Mucosa of descending colon (tissue), 3 donors: ENCODE measurements at regions of chr2 and their contacts with region 1.

Region 1: DNA sequence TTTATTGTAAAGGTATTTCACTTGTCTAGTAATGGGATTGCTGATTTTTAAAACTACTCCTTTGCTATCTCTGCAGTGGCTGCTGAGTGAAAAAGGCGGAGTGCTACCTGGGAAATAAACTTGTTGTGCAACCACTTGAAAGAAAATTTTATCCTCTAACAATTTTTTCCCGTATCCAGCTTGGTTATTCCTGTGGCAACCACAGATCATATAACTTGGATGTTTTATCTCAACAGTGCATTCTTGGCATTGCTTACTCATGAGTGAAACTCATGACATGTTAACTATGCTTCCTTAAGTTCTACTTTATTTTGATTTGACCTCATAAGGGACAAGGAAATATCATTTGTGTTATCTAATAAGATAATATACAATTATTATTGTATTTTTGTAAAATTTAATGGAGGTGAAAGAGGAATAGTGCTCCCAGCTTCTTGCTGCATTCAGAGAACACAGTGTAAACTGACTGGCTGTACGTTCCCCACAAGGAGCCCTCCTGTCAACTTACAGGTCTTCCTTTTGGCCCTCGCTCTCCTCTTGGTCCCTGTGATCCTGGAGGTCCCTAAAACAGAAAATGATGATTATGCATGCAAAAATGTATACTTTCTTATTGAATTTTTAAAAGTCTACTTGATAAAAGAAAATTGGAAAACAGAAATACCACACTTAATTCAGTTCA is 82.7 kb downstream of the COL5A2 start:
- DNase-seq: no peak
- ATAC-seq: no peak
- H3K4me3 ChIP-seq: no peak overlapping the region
- H3K4me1 ChIP-seq: no peaks in the 10 kb centered on the region
- CTCF ChIP-seq: no peak

Region 2: DNA sequence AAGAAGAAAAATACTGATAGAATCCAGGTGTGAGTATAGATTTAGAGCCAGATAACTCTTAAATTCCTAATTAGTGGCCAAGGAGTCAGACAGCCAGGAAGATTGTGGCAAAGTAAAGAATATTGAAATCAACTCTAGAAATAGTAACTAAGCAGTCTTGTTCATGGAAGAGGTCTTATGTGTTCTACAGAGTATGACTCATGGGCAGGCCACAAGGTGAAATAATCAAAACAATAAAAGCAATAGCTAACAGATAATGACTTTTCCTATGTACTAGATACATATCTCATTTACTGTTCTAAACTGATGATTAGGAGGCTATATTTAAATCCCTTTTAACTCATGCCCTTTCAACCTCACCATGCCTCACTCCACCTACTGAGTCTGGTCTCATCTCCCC is 350.2 kb before region 1 on chr2:
- intact Hi-C with region 1: no loop called
- DNase-seq: no peak
- ATAC-seq: no peak
- H3K4me3 ChIP-seq: no peak overlapping the region
- H3K4me1 ChIP-seq: no peaks in the 10 kb centered on the region
- CTCF ChIP-seq: no peak

Region 3: DNA sequence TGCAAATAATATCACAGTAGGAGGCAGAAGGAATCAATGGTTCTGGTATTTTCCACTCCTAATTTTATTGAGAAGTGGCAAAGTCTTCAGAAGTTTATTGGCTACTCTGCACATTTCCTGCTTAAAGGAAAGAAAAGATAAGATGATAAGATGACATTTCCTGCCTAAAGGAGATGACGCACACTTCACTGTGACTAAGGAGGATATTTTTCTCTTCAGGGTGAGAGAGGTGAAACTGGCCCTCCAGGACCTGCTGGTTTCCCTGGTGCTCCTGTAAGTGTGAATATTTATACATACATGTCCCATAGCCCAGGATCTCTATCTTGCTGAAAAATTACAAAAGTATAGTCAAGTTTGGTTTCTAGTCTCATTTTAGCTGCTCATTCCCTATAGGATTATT is 94.8 kb before region 1 on chr2:
- intact Hi-C with region 1: no loop called
- DNase-seq: no peak
- ATAC-seq: no peak
- H3K4me3 ChIP-seq: no peak overlapping the region
- H3K4me1 ChIP-seq: no peaks in the 10 kb centered on the region
- CTCF ChIP-seq: no peak

Region 4: DNA sequence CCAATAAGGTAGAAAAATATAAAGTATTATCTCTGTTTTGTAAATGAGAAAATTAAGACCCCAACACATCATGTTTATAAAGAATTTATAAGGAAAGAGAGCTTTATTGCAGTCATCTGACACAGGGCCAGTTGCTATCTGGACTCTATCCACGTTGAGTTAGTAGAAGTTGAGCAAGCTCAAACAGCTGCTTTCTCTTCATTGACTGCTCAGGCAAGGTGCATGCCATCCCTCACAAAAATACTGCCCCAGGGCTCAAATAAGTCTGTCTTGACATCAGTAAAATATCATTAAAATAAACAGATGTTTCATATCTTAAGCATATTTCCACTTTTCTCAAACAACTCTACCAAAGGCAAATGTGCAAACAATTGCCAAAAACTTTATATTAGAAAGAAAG is 67.8 kb after region 1 on chr2:
- intact Hi-C with region 1: loop called in 1 of 2 experiments (anchors 10 kb)
- DNase-seq: no peak
- ATAC-seq: no peak
- H3K4me3 ChIP-seq: no peak overlapping the region
- H3K4me1 ChIP-seq: no peaks in the 10 kb centered on the region
- CTCF ChIP-seq: no peak